ENCODE measurements at regions of chr10 and their contacts with region 1.

Region 1: GRCh38 chr10:93482145-93482834 is at the start of gene MYOF:
- DNase-seq: peak; percentile 68
- ATAC-seq: peak; percentile 79
- H3K4me3 Mint-ChIP-seq: peak within 1 kb of the TSS; percentile 97
- H3K27ac Mint-ChIP-seq: peak within 1 kb of the TSS; percentile 99
- H3K4me1 Mint-ChIP-seq: peaks cover 24% of the 10 kb centered on the region
- H3K27me3 Mint-ChIP-seq: peaks cover 9% of the 10 kb centered on the region
- total RNA-seq, gene MYOF: 37.8 to 40.0 TPM

Region 2: DNA sequence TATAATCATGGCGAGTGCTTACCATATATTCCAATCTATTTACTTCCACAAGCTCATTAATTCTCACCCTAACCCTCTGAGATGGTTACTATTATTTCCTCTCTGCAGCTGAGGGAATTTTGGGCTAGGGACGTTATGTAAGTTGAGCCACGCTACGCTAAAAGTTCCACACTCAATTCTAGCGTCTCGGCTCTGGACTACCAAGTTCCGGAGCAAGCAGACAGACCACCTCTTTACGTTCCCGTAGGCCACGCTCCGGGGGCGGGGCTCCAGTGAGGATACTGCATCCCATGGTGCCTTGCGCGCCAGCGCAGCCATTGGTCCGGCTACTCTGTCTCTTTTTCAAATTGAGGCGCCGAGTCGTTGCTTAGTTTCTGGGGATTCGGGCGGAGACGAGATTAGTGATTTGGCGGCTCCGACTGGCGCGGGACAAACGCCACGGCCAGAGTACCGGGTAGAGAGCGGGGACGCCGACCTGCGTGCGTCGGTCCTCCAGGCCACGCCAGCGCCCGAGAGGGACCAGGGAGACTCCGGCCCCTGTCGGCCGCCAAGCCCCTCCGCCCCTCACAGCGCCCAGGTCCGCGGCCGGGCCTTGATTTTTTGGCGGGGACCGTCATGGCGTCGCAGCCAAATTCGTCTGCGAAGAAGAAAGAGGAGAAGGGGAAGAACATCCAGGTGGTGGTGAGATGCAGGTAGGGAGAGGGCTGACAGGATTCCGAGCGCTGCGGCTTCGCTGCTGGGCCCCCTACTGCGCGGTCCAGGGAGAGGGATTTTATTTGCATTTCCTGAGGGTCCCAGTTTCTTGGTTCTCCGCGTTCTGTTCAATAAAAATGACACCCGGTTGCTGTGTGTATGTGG is 889.3 kb before region 1 on chr10 and contains the start of gene KIF11:
- CTCF ChIA-PET with region 1: no interaction called
- POLR2A ChIA-PET with region 1: no interaction called
- intact Hi-C with region 1: loop called in 1 of 2 experiments (anchors 5 kb)
- DNase-seq: peak; percentile 99
- ATAC-seq: peak; percentile 84
- H3K4me3 Mint-ChIP-seq: peak within 1 kb of the TSS; percentile 94
- H3K27ac Mint-ChIP-seq: peak within 1 kb of the TSS; percentile 97
- H3K4me1 Mint-ChIP-seq: peaks cover 37% of the 10 kb centered on the region
- H3K27me3 Mint-ChIP-seq: no peaks in the 10 kb centered on the region
- total RNA-seq, gene KIF11: 59.1 to 59.3 TPM

Region 3: DNA sequence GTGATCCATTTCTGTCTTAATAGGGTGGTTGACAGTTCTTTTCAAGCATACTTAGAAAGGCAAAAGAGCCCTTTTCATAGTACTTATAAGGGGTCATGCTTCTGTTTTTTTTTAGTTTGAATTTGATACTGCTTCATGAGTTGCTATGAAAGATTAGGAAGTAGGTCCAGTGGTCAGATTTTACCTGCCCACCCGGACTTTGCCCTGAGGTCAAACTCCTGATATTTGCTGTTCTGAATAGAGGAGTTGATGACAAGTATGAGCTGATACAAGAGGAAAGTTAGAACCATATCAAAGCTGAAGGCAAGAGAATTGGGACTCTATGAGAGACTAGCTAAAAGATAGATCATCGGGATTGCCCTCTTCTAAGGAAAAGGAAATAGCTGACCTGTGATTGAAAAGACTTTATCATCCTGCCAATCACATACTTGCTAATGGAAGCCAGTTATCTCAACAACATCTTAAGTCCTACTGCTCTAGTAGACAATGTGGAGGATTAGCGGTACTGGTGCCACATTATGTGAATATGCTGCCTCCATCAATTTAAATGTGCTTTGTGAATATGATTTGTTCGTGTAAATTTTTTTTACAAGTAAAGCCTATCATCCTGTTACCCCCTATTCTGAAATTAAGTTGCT is 459.2 kb before region 1 on chr10:
- CTCF ChIA-PET with region 1: no interaction called
- POLR2A ChIA-PET with region 1: no interaction called
- intact Hi-C with region 1: no loop called
- DNase-seq: no peak
- ATAC-seq: no peak
- H3K4me3 Mint-ChIP-seq: no peak overlapping the region
- H3K27ac Mint-ChIP-seq: no peak overlapping the region
- H3K4me1 Mint-ChIP-seq: no peaks in the 10 kb centered on the region
- H3K27me3 Mint-ChIP-seq: no peaks in the 10 kb centered on the region

Region 4: DNA sequence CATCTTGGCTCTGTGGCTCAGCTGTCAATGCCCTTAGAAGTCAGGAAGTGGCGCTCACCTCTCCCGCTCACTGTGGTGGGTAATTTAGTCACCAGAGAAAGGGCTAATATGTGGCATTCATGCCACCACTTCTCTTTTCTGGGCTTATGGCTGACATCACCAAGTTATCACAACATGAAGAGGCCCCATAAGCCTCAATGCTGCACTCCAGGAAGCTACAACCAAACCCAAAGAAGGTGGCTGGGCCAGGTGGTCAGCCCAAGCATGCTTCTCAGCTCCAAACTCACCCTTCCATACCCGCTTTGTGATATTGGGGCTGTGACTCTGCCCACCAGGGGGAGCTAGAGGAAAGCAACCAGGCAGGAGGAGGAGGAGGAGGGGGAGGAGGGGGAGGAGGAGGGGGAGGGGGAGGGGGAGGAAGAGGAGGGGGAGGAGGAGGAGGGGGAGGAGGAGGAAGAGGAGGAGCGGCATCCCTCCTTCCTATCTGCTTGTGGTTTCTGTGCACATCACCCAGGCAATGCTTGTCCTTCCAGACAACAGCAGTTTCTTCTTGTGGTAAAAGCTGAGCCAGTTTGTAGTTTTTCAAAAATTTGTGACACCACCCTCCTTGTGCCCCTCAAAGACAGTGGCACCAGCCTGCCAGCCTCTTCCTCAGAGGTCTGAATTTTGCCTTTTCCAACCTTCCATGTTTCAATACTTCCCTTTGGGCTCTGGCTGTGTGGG is 366.5 kb before region 1 on chr10:
- CTCF ChIA-PET with region 1: no interaction called
- POLR2A ChIA-PET with region 1: no interaction called
- intact Hi-C with region 1: loop called in 1 of 2 experiments (anchors 10 kb)
- DNase-seq: peak; percentile 85
- ATAC-seq: peak; percentile 83
- H3K4me3 Mint-ChIP-seq: no peak overlapping the region
- H3K27ac Mint-ChIP-seq: no peak overlapping the region
- H3K4me1 Mint-ChIP-seq: peaks cover 11% of the 10 kb centered on the region
- H3K27me3 Mint-ChIP-seq: peaks cover 5% of the 10 kb centered on the region

Region 5: GRCh38 chr10:93376372-93377293 is 105.7 kb before region 1 on chr10:
- CTCF ChIA-PET with region 1: interaction called, 378 read pairs
- POLR2A ChIA-PET with region 1: interaction called, 15 read pairs
- intact Hi-C with region 1: loop called (anchors 1 kb)
- DNase-seq: peak; percentile 41
- ATAC-seq: peak; percentile 20
- H3K4me3 Mint-ChIP-seq: no peak overlapping the region
- H3K27ac Mint-ChIP-seq: no peak overlapping the region
- H3K4me1 Mint-ChIP-seq: peaks cover 51% of the 10 kb centered on the region
- H3K27me3 Mint-ChIP-seq: peaks cover 5% of the 10 kb centered on the region

Region 6: DNA sequence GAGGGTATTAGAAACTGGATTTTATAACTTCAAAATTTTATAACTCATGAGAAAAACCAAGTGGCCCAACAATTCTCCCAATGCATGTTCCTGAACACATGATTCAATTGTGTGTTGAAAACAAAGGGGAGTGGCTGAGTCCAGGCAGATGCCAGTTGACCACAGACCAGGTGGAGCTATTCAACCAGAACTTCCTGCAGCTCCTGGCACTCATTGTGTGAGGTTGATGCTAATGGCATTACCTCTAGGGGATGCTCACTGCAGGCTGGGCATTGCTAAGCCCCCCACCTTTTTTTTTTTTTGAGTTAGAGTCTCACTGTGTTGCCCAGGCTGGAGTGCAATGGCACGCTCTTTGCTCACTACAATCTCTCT is 20.5 kb before region 1 on chr10:
- CTCF ChIA-PET with region 1: interaction called, 18 read pairs
- POLR2A ChIA-PET with region 1: interaction called, 11 read pairs
- intact Hi-C with region 1: loop called in 1 of 2 experiments (anchors 1 kb)
- DNase-seq: no peak
- ATAC-seq: no peak
- H3K4me3 Mint-ChIP-seq: no peak overlapping the region
- H3K27ac Mint-ChIP-seq: no peak overlapping the region
- H3K4me1 Mint-ChIP-seq: peaks cover 21% of the 10 kb centered on the region
- H3K27me3 Mint-ChIP-seq: no peaks in the 10 kb centered on the region

Region 7: DNA sequence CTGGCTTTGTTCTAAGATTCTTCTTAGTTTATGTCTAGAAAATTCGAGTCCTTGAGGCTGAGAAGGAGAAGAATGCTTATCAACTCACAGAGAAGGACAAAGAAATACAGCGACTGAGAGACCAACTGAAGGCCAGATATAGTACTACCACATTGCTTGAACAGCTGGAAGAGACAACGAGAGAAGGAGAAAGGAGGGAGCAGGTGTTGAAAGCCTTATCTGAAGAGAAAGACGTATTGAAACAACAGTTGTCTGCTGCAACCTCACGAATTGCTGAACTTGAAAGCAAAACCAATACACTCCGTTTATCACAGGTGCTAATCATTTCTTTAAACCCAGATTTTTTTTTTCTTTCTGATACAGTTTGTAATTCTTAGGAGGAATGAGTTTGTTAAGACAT is 20.8 kb after region 1 on chr10:
- CTCF ChIA-PET with region 1: interaction called, 71 read pairs
- POLR2A ChIA-PET with region 1: no interaction called
- intact Hi-C with region 1: no loop called
- DNase-seq: no peak
- ATAC-seq: peak; percentile 79
- H3K4me3 Mint-ChIP-seq: no peak overlapping the region
- H3K27ac Mint-ChIP-seq: peak overlapping the region; percentile 27
- H3K4me1 Mint-ChIP-seq: peaks cover 45% of the 10 kb centered on the region
- H3K27me3 Mint-ChIP-seq: no peaks in the 10 kb centered on the region